Activated naive CD8-positive, alpha-beta T cell treated with anti-CD3 and anti-CD28 coated beads, Interleukin-2, amount 10 ng/mL, durations not matched to agents 7 days and 5 days (primary cell): ENCODE measurements at regions of chr12 and their contacts with region 1.

Region 1: DNA sequence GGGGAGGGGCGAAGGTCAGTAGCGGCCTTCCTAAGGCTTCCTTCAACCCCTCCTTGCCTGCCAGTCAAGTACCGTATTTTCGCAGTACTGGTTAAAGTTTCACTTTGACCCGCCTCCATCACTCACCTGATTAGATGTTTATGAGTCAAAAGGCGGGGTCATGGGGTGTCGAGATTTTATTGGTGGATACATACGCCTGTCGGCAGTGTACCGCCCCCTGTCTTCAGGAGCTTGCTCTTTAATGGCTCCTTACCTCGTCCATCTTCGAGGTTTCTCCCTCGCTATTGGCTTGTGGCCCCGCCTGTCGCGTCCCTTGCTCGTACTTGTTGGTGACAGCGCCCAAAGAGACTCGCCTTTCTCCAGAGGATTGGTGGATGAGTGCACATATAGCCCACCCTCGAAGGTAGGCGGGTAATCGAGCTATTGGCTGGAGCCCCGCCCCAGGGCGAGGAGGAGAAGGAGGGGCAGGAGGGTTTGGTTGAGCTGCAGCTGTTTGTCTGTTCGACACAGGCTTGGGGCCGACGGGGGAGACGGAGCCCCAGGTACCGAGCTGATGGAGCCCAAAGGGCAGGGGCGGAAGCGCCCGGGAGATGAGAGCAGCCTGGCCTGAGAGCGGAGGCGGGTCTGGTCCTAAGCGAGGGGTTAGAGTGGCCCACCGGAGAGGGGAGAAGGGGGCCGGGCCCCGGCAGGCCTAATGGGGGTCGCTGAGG is at the start of gene RAB5B:
- DNase-seq: peak; percentile 90
- ATAC-seq: peak; percentile 95
- H3K4me3 Mint-ChIP-seq: no peak within 1 kb of the TSS
- H3K27ac Mint-ChIP-seq: no peak within 1 kb of the TSS
- H3K4me1 Mint-ChIP-seq: peaks cover 17% of the 10 kb centered on the region
- H3K27me3 Mint-ChIP-seq: no peaks in the 10 kb centered on the region
- total RNA-seq, gene RAB5B: 69.7 to 72.4 TPM

Region 2: DNA sequence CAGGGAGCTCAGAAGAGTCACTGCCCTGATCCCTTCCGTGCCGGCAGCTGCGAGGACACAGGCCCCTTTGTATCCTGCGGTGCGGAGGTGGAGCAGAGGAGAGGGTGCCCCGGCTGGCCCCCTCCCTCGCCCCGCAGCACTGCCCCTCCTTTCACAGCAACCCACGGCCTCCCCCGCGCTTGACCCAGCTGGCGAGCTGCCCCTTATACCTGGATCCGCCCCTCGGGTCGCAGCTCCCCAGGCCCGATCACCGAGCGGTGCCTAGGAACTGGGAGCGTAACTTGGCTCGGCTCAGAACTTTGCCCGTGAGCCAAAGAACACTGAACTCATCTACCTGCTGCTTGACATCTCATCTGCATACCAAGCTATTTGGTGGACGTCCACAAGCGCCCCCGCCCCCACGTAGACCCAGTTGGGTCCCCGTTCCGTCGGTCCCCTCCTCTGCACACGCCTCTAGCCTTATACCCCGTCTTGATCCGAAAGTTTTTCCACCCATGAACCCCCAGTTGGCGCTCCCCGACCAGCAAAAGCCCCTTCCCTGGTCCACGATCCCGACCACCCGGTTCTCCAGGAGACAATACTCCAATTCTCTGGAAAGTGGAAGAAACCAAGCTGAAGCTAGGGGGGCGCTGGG is 143.7 kb before region 1 on chr12:
- POLR2A ChIA-PET with region 1: interaction called, 20 read pairs
- DNase-seq: no peak
- ATAC-seq: peak; percentile 41
- H3K4me3 Mint-ChIP-seq: peak overlapping the region; percentile 99
- H3K27ac Mint-ChIP-seq: peak overlapping the region; percentile 97
- H3K4me1 Mint-ChIP-seq: peaks cover 33% of the 10 kb centered on the region
- H3K27me3 Mint-ChIP-seq: no peaks in the 10 kb centered on the region

Region 3: DNA sequence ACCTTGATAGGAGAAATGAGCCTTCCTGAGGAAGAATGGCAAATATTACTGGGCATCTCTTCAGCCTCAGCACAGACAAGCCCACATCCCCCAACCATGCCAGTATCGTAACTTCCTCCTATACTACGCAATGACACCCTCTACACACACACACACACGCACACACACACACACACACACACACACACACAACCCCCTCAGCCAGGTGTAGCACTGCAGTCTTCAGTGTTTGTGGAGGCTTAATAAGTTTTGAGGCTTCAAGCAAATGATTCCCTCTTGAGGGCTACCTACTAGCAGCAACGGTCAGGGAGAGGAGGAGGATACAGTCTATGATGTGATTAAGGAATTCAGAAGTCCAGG is 41.2 kb before region 1 on chr12:
- POLR2A ChIA-PET with region 1: interaction called, 43 read pairs
- DNase-seq: no peak
- ATAC-seq: no peak
- H3K4me3 Mint-ChIP-seq: peak overlapping the region; percentile 98
- H3K27ac Mint-ChIP-seq: peak overlapping the region; percentile 98
- H3K4me1 Mint-ChIP-seq: peaks cover 49% of the 10 kb centered on the region
- H3K27me3 Mint-ChIP-seq: no peaks in the 10 kb centered on the region

Region 4: DNA sequence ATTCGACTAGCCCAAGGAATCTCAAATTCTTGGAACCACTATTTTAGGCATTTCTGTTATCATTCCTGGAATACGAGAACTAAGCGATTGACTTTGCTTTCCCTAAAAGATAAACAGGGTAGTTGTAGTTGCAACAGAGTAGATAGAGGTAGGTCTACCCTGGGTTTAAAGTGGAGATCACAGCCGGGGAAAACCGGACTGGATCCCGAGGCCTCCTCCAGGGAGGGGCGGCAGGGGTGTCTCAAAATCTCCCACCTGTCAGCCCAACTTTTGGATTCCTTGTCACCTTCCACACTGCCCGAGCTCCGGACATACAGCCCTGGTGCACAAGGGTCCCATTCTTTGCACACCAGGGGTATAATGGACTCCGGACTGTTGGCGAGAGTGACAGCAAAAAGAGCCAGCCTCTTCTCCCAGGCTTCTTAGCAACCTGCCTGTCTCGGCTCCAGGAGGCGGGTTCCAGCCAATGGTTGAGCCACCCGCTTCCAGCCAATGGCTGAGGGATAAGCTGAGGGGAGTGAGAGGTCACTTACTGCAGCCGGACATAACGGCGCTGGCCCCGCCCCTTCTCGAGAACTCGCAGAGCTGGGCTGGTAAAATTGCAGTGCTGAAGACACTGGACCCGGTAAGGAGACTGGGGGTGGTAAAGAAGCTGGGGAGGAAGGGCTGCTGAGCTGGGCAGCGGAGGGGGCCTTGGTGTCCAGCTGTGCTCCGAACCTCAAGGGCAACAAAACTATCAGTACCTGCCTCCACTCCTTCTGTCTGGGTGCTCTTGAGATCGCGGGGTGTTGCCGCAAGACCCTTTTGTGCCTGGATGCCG is 23.2 kb after region 1 on chr12 and contains the start of gene SUOX:
- POLR2A ChIA-PET with region 1: interaction called, 16 read pairs
- DNase-seq: peak; percentile 55
- ATAC-seq: peak; percentile 87
- H3K4me3 Mint-ChIP-seq: peak within 1 kb of the TSS; percentile 86
- H3K27ac Mint-ChIP-seq: peak within 1 kb of the TSS; percentile 56
- H3K4me1 Mint-ChIP-seq: peaks cover 21% of the 10 kb centered on the region
- H3K27me3 Mint-ChIP-seq: peaks cover 2% of the 10 kb centered on the region
- total RNA-seq, gene SUOX: 8.1 to 11.4 TPM

Region 5: GRCh38 chr12:56041552-56042429 is 68.0 kb after region 1 on chr12 and contains the start of gene RPS26:
- POLR2A ChIA-PET with region 1: interaction called, 16 read pairs
- DNase-seq: peak; percentile 85
- ATAC-seq: peak; percentile 94
- H3K4me3 Mint-ChIP-seq: peak within 1 kb of the TSS; percentile 93
- H3K27ac Mint-ChIP-seq: peak within 1 kb of the TSS; percentile 94
- H3K4me1 Mint-ChIP-seq: peaks cover 33% of the 10 kb centered on the region
- H3K27me3 Mint-ChIP-seq: no peaks in the 10 kb centered on the region
- total RNA-seq, gene RPS26: 39.1 to 42.6 TPM